Activated CD4-positive, alpha-beta memory T cell treated with anti-CD3 and anti-CD28 coated beads for 36 hours (primary cell): ENCODE measurements at regions of chr1 and their contacts with region 1.

Region 1: DNA sequence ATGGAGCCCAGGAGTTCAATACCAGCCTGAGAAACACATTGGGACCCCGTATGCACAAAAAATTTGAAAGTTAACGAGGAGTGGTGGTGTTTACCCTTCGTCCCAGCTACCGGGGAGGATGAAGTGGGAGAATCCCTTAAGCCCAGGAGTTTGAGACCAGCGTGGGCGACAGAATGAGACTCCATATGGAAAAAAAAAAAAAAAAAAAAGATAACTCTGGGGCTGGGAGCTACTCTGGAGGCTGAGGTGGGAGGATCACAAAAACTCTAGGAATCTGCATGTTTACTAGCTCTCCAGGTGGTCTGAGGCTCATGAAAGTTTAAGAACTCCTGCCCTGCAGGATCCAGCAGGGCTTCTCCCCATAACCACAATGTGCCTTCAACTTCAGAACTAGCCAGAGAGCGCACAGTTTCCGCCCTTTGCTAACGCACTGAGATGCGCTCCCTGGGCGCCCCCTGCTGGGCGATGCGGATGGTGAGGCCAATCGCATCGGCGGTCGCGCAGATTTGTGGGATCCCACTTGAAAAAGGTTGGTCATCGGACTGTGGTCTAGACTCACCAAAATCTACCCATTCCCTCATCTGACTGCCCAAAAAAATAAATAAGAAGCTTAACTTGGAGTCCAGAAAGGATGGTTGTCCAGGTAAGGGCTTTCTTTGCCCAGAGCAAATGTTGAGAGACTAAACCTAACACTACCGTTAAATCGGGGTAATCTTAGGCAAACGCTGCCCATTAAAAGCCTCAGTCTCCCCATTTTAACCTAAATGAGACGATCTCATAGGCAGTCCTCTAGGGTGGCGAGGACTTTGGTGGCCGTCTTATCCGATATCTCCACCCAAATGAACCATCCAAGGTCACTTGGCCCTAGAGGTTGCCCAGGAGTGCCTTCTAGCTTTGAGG is 8.8 kb downstream of the ZNF683 start:
- DNase-seq: peak; percentile 91
- H3K4me3 Mint-ChIP-seq: peak overlapping the region; percentile 8
- H3K27ac Mint-ChIP-seq: peak overlapping the region; percentile 58
- H3K4me1 Mint-ChIP-seq: peaks cover 41% of the 10 kb centered on the region
- H3K27me3 Mint-ChIP-seq: peaks cover 7% of the 10 kb centered on the region

Region 2: DNA sequence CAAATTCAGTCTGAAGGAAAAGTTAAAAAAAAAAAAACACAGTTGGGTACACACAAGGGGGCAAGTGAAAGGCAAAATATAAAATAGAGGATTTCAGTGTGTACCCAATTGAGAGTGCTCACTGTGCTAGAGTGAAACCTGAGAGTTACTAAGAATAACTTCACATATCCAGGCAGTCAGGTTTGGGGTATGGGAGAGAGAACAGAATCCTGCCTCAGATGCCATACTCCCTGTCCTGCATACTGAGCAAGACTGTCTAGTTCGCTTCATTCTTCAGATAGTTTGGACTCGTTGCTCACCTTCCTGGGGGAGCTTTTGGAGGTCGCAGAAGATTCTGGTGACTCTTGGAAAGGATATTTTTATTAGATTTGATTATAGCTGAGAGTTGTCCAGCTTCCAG is 109.4 kb before region 1 on chr1:
- CTCF ChIA-PET with region 1: no interaction called
- POLR2A ChIA-PET with region 1: no interaction called
- intact Hi-C with region 1: no loop called
- DNase-seq: no peak
- H3K4me3 Mint-ChIP-seq: no peak overlapping the region
- H3K27ac Mint-ChIP-seq: no peak overlapping the region
- H3K4me1 Mint-ChIP-seq: peaks cover 10% of the 10 kb centered on the region
- H3K27me3 Mint-ChIP-seq: no peaks in the 10 kb centered on the region

Region 3: DNA sequence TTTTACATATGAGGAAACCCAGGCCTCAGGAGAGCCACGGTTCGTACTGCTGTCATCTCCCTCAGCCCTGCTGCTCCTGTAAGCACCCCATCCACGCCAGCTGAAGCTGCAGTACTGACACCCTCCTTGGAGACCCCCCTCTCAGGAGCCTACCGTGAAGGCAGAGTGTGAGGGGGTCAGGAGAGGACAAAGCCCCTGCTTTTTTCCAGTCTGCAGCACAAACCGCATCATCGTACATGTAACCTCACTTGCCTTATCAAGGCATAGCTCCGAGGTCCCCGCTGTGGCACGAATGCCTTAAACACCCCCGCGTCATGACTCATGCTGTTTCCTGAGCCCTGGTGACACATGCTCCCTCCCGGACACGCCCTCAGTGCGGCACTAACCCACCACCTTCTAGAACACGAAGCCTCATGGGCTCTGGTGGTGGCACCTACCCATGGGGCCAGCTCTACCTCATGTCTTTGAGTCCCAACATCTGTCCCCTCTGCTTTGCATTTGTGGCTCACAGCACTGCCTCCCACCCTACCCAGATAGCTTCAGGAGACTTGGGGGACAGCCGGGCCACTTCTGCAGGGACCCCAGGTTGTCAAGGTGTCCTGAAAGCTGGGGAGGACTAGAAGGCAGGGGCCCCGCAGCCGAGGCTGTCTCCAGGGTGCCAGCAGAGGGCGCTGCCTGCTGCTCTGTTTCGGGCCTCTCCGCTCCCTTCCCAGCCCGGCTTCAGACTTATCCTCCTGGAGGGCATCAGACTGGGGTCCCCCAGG is 79.0 kb before region 1 on chr1:
- CTCF ChIA-PET with region 1: interaction called, 54 read pairs
- POLR2A ChIA-PET with region 1: interaction called, 5 read pairs
- intact Hi-C with region 1: loop called (anchors 2 kb)
- DNase-seq: peak; percentile 98
- H3K4me3 Mint-ChIP-seq: peak overlapping the region; percentile 68
- H3K27ac Mint-ChIP-seq: peak overlapping the region; percentile 98
- H3K4me1 Mint-ChIP-seq: peaks cover 90% of the 10 kb centered on the region
- H3K27me3 Mint-ChIP-seq: no peaks in the 10 kb centered on the region

Region 4: GRCh38 chr1:26378088-26378878 is 14.5 kb after region 1 on chr1:
- CTCF ChIA-PET with region 1: interaction called, 48 read pairs
- POLR2A ChIA-PET with region 1: interaction called, 3 read pairs
- intact Hi-C with region 1: no loop called
- DNase-seq: peak; percentile 81
- H3K4me3 Mint-ChIP-seq: peak overlapping the region; percentile 30
- H3K27ac Mint-ChIP-seq: peak overlapping the region; percentile 57
- H3K4me1 Mint-ChIP-seq: peaks cover 60% of the 10 kb centered on the region
- H3K27me3 Mint-ChIP-seq: no peaks in the 10 kb centered on the region

Region 5: DNA sequence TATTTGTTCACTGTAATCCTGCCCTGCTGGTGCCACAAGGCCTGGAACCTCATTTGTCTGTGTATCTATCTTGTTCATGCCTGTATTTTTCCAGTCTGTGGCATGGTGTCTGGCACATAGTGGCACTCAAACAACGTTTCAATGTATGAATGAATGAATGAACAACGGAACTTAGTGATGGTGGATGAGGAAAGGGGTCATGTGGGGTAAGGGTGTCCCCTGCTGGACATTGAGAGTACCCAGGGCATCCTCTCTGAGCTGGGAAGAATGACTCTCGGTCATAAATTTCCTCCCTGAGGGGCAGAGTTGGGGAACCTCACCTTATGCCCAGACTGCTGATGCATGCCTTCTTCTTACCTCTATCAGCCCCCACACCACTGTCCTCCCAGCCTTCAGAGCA is 27.7 kb after region 1 on chr1:
- CTCF ChIA-PET with region 1: interaction called, 17 read pairs
- POLR2A ChIA-PET with region 1: no interaction called
- intact Hi-C with region 1: loop called (anchors 5 kb)
- DNase-seq: peak; percentile 64
- H3K4me3 Mint-ChIP-seq: no peak overlapping the region
- H3K27ac Mint-ChIP-seq: peak overlapping the region; percentile 9
- H3K4me1 Mint-ChIP-seq: peaks cover 34% of the 10 kb centered on the region
- H3K27me3 Mint-ChIP-seq: no peaks in the 10 kb centered on the region

Region 6: DNA sequence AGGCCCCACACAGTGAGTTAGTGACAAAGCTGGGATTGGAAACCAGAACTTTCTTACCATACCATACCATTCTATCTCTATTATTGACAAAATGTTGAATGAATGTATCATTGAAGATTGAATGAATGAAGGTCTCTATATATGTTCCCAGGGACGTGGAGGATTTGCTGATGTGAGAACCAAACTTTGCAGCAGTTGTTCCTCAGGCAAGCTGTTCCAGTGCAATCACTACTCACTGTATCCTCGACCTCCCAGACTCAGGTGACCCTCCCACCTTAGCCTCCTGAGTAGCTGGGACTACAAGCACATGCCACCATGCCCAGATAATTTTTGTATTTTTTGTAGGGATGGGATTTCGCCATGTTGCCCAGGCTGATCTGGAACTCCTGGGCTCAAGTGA is 35.2 kb after region 1 on chr1:
- CTCF ChIA-PET with region 1: interaction called, 9 read pairs
- POLR2A ChIA-PET with region 1: no interaction called
- intact Hi-C with region 1: loop called (anchors 5 kb)
- DNase-seq: no peak
- H3K4me3 Mint-ChIP-seq: no peak overlapping the region
- H3K27ac Mint-ChIP-seq: no peak overlapping the region
- H3K4me1 Mint-ChIP-seq: peaks cover 5% of the 10 kb centered on the region
- H3K27me3 Mint-ChIP-seq: peaks cover 10% of the 10 kb centered on the region

Region 7: DNA sequence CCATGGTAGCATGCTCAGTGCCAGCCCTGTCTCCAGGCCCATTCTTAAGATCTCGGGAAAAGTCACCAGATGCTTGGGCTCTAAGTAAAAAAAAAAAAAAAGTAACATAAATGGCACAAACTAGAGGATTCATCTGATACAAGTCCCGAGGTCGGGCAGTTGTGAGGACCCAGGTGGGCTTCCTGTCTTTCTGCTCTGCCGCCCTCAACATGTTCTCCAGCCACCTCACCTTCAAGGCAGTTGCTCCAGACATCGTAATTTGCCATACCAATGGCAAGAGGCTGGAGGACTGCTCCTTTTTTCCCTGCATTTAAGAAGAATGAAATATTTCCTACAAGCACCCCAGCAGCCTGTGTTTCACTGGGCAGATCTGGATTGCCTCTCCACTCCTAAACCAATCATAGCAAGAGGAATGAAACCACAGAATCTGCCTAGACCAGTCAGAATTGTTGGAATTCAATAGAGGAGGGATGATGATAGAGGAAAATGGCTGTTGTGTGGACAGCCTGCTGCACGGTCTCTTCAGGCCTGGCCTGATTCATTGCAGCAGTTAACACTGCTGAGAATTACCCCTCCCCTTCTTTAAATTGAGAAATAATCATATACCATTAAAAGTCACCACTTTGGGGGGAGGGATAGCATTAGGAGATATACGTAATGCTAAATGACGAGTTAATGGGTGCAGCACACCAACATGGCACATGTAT is 113.8 kb after region 1 on chr1:
- CTCF ChIA-PET with region 1: no interaction called
- POLR2A ChIA-PET with region 1: no interaction called
- intact Hi-C with region 1: no loop called
- DNase-seq: no peak
- H3K4me3 Mint-ChIP-seq: no peak overlapping the region
- H3K27ac Mint-ChIP-seq: peak overlapping the region; percentile 34
- H3K4me1 Mint-ChIP-seq: peaks cover 36% of the 10 kb centered on the region
- H3K27me3 Mint-ChIP-seq: no peaks in the 10 kb centered on the region